Motor neuron (in vitro differentiated cells): ENCODE measurements at regions of chr5 and their contacts with region 1.

Region 1: DNA sequence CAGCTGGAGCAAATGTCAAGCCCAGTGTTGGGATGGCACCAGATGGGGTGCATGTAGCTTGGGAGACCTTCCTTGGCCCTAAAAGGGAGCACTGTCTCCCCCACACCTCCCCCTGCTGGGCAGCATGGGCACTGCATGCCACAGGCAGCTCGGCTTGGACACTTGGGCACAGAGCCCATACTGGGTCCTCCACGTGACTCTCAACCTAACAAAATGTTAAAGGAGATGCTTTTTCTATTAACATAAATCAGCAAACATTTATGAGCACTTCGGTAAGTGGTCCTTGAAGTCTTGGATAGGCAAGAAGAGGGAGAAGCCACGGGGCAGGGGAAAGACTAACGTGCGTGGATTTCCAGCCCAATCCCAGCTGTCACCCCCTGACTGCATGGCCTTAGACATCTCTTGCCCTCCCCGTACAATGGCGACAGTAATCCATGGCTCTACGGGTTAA is 23.9 kb upstream of the MAPK9 start:
- ATAC-seq: peak in 3 of 8 experiments; percentile 65 to 97 (median 82)
- H3K4me3 ChIP-seq: no peak overlapping the region
- H3K27ac ChIP-seq: no peak overlapping the region
- H3K4me1 ChIP-seq: peaks cover 0 to 6% of the 10 kb centered on the region in 2 donors

Region 2: DNA sequence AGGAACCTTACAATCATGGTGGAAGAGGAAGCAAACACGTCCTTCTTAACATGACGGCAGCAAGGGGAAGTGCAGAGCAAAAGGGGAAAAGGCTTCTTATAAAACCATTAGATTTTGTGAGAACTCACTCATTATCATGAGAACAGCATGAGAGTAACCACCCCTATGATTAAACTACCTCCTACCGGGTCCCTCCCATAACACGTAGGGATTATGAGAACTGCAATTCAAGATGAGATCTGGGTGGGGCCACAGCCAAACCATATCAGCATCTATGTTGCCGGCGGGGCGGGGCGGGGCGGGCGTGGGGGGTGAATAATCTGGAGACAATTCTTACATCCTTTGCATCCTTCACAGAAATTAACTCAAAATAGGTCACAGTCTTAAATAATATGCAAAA is 96.2 kb after region 1 on chr5:
- in situ Hi-C with region 1: no loop called
- ATAC-seq: peak in 3 of 8 experiments; percentile 82 to 97 (median 97)
- H3K4me3 ChIP-seq: no peak overlapping the region
- H3K27ac ChIP-seq: no peak overlapping the region
- H3K4me1 ChIP-seq: no peaks in the 10 kb centered on the region

Region 3: GRCh38 chr5:180470966-180471582 is 155.3 kb after region 1 on chr5:
- in situ Hi-C with region 1: loop called in 1 of 9 experiments (anchors 25 kb)
- ATAC-seq: peak; percentile 8 to 95 (median 88)
- H3K4me3 ChIP-seq: no peak overlapping the region
- H3K27ac ChIP-seq: no peak overlapping the region
- H3K4me1 ChIP-seq: no peaks in the 10 kb centered on the region

Region 4: DNA sequence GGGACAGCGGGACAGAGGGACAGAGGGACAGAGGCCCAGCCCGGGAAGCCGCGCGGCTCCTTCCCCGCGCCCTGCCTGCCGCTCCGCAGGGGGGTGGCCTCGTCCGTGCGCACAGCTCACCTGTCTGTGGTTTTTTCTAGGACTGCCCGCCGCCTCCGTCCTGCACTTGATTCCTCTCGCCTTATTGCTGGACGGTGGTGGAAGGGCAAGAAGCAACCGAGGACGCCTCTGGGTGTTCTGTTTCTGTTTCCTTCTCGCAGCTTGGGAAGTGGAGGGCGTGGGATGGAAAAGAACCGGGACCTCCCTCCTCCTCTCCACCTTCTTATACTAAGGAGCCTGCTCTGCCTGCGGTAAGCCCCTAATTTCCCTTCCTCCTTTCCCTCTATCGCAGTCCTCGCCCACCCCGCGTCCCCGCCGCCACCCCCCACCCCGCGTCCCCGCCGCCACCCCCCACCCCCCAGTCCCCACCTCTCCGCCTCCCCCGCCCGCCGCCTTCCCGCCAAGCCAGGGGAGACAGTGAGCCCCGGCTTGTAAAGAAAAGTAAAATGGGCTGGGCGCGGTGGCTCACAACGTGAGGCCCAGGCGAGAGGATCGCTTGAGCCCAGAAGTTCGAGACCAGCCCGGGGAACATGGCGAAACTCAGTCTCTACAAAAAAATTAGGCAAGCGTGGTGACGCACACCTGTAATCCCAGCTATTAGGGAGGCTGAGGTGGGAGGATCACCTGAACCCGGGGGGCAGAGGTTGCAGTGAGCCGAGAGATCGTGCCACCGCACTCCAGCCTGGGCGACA is 343.2 kb after region 1 on chr5:
- in situ Hi-C with region 1: no loop called
- ATAC-seq: peak in 2 of 8 experiments; percentile 23 to 68
- H3K4me3 ChIP-seq: no peak overlapping the region
- H3K27ac ChIP-seq: no peak overlapping the region
- H3K4me1 ChIP-seq: no peaks in the 10 kb centered on the region